GM18951 (cell line): ENCODE measurements at regions of chr14 and their contacts with region 1.

Region 1: DNA sequence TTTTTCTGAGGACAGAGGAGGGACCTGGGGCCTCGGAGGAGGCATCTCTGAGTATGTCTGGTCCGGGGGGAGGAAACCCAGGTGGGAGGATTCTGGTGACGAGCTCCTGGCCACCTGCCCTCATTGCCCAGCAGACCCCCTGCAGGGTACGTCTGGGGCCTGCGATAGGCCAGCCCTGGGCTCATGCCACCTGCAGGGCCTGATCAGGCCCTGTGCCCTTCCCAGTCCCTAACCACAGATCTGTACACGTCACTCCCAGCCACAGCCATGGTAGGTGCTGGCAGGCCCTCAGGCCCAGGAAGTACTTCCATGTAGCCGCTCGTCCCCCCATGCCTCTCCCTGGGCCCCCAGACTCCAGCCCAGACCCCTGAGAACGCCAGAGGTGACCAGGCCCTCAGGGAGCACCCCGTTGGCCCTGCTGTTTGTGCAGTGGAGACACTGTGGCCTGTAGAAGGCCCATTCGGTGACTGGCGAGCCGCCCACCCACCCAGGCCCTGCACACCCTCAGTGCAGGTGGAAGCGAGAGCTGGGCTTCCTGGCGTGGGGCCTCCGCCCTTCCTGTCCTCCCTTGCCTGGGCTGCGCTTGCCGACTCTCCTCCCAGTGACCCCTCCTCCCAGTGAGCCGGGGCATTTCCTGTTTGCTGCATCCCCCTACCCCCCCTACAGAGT is 5.7 kb downstream of the INF2 start:
- POLR2A ChIP-seq: no peak

Region 2: DNA sequence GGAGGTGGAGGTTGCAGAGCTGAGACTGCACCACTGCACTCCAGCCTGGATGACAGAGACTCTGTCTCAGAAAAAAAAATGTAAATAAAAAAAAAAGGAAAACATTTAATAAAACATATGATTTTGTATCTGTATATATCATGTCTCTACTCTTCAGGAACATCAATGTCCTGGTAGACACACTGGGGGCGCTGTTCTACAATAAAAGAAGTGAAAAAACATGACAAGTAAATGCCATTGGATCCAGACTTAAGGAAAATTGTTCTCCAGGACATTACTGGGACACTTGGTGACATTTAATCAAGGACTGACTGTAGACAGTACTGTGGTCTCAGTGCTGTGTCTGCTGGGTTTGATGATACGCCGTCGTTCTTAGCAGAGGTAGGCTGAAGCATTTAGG is 1081.6 kb before region 1 on chr14:
- in situ Hi-C with region 1: no loop called
- POLR2A ChIP-seq: no peak

Region 3: GRCh38 chr14:104660597-104660996 is 34.5 kb before region 1 on chr14:
- in situ Hi-C with region 1: loop called (anchors 5 kb)
- POLR2A ChIP-seq: peak; percentile 33

Region 4: DNA sequence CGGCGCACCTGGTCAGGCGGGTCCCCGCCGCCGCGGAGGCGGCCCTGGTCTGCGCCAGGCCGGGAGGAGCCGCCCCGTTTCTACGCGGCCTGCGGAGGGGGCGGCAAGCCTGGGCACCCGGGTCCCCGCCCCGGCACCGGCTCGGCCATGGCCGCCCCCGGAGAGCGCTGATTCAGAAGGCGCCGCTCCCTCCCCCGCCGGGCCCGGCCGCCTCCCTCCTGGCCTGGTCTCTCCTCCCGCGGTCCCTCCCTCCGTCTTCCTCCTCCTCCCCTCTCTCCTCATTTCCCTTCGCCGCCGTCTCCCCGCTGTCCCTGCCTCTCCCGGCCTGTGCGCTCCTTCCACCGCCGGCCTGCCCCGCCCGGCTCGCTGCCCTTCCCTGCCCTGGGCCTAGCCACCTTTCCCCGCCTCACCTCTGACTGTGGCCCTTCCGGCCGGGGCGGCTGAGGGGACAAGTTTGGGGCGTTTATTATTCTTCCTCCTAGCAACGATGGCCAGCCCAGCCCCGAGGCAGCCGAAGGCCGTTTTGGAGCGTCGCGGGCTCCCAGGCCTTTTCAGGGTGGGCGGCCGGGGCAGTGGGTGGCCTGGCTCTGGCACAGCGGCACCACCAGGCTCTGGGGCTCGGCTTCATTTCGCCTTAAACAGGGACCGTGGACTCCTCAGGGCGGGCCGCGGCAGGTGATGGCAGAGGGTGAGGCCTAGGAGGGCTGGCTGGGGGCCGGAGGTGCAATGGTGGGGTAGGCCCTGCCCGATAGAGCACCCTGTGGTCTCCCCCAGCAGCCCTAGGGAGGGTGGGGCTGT is 170.7 kb after region 1 on chr14:
- in situ Hi-C with region 1: no loop called
- POLR2A ChIP-seq: no peak